Left ventricle myocardium inferior (tissue), 1 donor: ENCODE measurements at regions of chr18 and their contacts with region 1.

Region 1: GRCh38 chr18:76398896-76399612 is 96.0 kb downstream of the ZNF516 start:
- DNase-seq: peak; percentile 83
- H3K4me3 ChIP-seq: no peak overlapping the region
- H3K27ac ChIP-seq: no peak overlapping the region
- H3K4me1 ChIP-seq: peaks cover 18% of the 10 kb centered on the region
- H3K27me3 ChIP-seq: no peaks in the 10 kb centered on the region
- CTCF ChIP-seq: peak; percentile 99

Region 2: DNA sequence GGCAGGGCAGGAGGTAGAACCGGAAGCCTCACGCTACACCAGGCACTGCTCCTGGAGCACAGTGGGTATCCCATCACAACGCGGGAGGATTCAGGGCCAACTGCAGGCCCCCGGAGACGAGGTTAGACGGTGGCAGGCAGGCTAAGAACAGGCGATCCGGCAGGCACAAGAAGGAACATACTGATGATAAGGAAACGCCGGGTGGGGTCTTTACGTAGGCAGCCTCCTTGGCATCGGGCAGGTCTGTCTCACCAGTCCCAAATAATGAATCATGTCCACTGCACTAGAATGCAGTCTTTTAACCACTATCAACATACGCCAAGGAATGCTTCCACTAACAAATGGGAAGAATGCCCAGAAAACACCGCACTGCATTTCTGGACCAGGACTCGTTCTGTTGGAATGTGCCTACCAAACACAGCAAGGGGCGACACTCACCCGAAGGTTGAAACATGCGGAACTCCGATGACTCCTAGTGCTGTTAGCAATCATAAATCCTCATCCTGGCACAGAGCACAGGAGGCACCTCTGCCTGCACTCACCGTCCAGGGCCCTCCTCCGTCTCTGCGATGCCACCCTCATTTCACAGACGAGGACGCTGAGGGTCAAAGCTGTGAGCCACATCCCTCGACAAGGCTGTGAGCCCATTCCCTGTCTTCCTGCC is 60.8 kb after region 1 on chr18:
- intact Hi-C with region 1: no loop called
- DNase-seq: no peak
- H3K4me3 ChIP-seq: peak overlapping the region; percentile 44
- H3K27ac ChIP-seq: peak overlapping the region; percentile 61
- H3K4me1 ChIP-seq: peaks cover 40% of the 10 kb centered on the region
- H3K27me3 ChIP-seq: no peaks in the 10 kb centered on the region
- CTCF ChIP-seq: no peak

Region 3: DNA sequence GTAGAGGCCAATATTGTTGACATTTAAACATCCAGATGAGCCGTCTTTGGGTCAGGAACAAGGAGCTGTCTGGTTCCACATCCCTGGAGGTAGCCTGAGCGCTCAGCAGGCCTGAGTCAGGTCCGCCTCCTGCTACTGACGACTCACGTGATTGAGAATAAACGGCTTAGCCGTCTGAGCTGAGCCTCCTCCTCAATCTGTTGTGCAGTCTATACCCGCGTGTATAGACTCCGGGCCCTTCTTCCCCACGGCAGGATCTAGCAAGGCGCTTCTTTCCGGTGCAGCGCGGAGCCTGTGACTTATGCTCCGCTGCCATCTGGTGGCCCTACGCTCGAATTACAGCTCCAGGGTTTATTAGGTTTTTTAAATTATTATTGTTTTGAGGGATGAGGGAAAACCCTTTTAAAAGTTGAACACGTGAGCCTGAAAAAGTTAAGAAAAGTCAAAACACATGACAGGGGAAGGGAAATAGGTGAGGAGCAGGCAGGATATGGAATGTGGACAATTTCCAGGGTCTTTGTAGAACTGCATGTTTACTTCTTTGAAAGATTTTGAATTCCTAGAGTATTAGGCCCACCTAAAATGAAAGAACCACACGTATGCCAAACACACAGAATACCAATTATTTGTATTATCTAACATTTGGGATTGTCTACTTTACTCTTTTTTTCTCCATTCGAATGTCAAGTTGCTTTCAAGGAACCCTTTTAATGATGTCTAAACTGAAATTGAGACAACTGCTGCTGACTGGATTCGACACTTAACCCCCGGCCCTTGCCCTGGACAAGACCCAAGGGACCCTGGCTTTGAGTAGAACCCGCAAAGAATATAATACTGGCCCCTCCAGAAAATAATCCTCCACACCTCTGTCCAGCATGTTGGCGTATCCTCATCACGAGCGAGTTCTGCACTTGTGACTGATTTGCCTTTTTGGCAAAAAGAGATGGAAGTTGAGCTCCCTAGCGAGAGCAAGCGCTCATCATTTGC is 310.9 kb after region 1 on chr18:
- intact Hi-C with region 1: loop called (anchors 5 kb)
- DNase-seq: peak; percentile 62
- H3K4me3 ChIP-seq: peak overlapping the region; percentile 34
- H3K27ac ChIP-seq: no peak overlapping the region
- H3K4me1 ChIP-seq: peaks cover 8% of the 10 kb centered on the region
- H3K27me3 ChIP-seq: no peaks in the 10 kb centered on the region
- CTCF ChIP-seq: peak; percentile 92